ENCODE measurements at regions of chr11 and their contacts with region 1.

Region 1: DNA sequence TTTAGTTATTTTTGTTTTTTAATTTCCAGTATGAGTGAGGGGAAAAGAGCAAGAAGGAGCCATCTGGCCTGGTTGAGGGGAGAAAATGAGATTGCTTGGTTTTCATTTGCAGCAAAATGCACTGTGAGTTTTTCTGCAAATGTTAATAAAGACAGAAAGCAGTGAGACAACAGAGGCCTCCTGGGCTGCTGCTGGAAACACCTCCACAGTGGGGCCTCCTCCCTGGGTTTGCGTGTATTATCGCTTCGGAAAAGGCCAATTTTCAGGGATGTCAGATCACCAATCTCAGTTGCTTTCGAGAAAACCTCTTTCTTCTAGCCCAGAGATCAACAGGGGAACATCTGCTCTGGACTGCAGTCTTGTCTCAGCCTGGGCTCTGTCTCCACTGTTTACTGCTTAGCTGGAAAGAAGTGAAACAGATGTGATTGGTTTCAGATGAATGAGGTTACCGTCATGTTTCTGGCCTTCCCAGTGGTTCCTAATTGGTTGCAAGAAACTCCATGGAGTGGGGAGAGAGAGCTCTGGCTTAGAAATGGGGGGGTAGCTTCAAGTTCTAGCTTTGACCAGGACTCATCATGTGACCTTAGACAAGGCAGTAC is 17.3 kb downstream of the TSPAN18 start:
- DNase-seq: no peak
- CTCF ChIP-seq: no peak

Region 2: GRCh38 chr11:44731685-44732430 is 12.2 kb before region 1 on chr11:
- CTCF ChIA-PET with region 1: interaction called, 17 read pairs
- POLR2A ChIA-PET with region 1: no interaction called
- DNase-seq: no peak
- CTCF ChIP-seq: no peak